ENCODE measurements at regions of chr2 and their contacts with region 1.

Region 1: GRCh38 chr2:229273723-229274338 is 2.7 kb upstream of the PID1 start:
- DNase-seq: no peak
- H3K4me3 Mint-ChIP-seq: no peak overlapping the region
- H3K27ac Mint-ChIP-seq: no peak overlapping the region
- H3K4me1 Mint-ChIP-seq: no peaks in the 10 kb centered on the region
- H3K27me3 Mint-ChIP-seq: peaks cover 15% of the 10 kb centered on the region

Region 2: GRCh38 chr2:227890495-227891079 is 1383.2 kb before region 1 on chr2:
- intact Hi-C with region 1: loop called (anchors 2 kb)
- DNase-seq: no peak
- H3K4me3 Mint-ChIP-seq: no peak overlapping the region
- H3K27ac Mint-ChIP-seq: no peak overlapping the region
- H3K4me1 Mint-ChIP-seq: no peaks in the 10 kb centered on the region
- H3K27me3 Mint-ChIP-seq: no peaks in the 10 kb centered on the region

Region 3: DNA sequence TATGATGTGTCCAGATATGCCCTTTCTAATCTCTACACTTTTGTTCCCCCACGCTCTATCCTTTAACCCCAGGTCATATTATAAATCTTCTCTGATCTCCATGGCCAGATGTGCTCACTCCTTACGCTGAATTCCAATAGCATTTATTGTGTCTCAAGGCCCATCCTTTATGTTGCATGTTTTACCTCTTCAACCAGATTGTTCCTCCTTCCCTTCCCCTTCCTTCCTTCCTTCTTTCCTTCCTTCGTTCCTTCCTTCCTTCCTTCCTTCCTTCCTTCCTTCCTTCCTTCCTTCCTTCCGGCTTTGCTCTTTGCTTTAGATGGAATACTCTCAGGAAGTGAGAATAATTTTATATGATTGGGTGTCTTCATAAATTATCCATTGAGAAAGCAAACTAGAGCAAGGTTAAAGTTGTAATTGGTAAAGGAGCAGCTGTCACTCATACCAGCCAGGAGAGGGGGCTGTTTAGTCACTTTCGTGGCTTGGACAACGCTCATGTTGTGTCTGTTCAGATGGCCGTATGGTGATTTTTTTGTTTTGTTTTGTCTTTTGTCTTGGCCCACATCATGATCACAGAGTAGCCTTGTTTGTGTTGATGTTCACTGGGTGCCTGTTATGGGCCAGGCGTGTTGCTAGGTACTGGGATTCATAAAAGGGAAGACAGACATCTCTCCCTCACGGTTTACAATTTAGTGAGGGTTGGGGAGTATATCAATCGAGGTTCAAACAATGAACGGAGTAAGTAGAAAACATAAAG is 1334.4 kb before region 1 on chr2:
- intact Hi-C with region 1: loop called (anchors 5 kb)
- DNase-seq: no peak
- H3K4me3 Mint-ChIP-seq: no peak overlapping the region
- H3K27ac Mint-ChIP-seq: no peak overlapping the region
- H3K4me1 Mint-ChIP-seq: no peaks in the 10 kb centered on the region
- H3K27me3 Mint-ChIP-seq: no peaks in the 10 kb centered on the region

Region 4: GRCh38 chr2:229098801-229099200 is 175.0 kb before region 1 on chr2:
- intact Hi-C with region 1: no loop called
- DNase-seq: no peak
- H3K4me3 Mint-ChIP-seq: no peak overlapping the region
- H3K27ac Mint-ChIP-seq: no peak overlapping the region
- H3K4me1 Mint-ChIP-seq: no peaks in the 10 kb centered on the region
- H3K27me3 Mint-ChIP-seq: no peaks in the 10 kb centered on the region

Region 5: DNA sequence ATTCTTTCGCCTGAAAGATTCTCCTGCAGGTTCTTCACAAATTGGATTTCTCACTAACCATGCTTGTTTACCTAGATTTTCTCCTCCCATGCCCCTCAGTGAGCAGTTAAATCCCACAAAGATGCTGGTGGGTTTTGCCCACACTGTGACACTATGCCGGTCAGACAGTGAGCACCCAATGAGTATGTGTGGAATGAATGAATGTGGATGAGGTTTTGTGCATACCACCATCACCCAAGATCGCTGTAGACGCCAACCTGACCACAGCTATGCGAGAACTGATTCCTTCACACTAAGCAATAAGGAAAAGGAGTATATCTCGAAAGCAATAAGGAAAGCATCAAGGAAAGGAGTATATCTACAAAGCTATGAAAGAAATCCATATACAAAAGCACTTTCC is 119.5 kb before region 1 on chr2:
- intact Hi-C with region 1: no loop called
- DNase-seq: no peak
- H3K4me3 Mint-ChIP-seq: no peak overlapping the region
- H3K27ac Mint-ChIP-seq: no peak overlapping the region
- H3K4me1 Mint-ChIP-seq: no peaks in the 10 kb centered on the region
- H3K27me3 Mint-ChIP-seq: no peaks in the 10 kb centered on the region